Activated CD8-positive, alpha-beta T cell treated with anti-CD3 and anti-CD28 coated beads, Interleukin-2, amount 10 ng/mL, durations not matched to agents 7 days and 5 days (primary cell): ENCODE measurements at regions of chr16 and their contacts with region 1.

Region 1: GRCh38 chr16:50326949-50327402 is 41.8 kb downstream of the BRD7 start:
- DNase-seq: peak; percentile 88
- ATAC-seq: peak; percentile 96
- H3K4me3 Mint-ChIP-seq: no peak overlapping the region
- H3K27ac Mint-ChIP-seq: peak overlapping the region; percentile 78
- H3K4me1 Mint-ChIP-seq: peaks cover 62% of the 10 kb centered on the region
- H3K27me3 Mint-ChIP-seq: no peaks in the 10 kb centered on the region

Region 2: DNA sequence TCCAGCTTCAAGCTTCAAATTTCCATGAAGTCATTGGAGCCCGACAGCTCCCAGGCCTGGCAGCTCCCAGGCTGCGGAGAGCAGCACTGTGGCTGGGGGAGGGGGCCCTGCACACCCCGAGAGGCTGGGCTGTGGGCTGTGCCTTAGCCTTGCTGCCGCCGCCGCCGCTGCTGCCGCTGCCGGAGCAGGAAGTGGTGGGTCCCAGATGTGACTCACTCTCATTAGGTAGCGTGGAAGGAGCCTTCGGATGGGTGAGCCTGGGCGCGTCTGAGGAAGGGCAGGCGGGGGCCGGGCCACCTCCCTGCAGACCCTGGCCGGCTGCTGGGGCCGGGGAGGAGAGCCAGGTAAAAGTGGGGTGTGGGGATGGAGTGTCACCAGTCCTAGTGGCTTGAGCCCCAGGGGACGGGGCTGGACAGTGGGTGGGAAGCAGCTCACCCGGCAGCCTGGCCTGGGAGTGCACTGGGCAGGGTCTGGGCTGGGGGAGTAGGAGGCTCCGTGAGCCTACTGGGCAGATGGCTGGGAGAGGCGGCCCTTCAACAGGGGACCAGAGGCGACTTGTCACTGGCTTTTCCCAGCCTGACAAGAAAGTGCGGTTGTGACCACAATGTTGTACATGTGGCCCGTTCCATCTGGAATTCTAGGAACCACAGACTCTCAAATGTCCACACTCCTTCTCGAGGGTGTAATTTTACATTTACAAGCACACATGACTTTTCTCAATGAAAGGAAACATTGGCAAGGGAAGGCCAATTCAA is 60.5 kb before region 1 on chr16 and contains the start of gene ADCY7:
- CTCF ChIA-PET with region 1: interaction called, 19 read pairs
- POLR2A ChIA-PET with region 1: no interaction called
- DNase-seq: peak; percentile 90
- ATAC-seq: peak; percentile 91
- H3K4me3 Mint-ChIP-seq: peak within 1 kb of the TSS; percentile 98
- H3K27ac Mint-ChIP-seq: peak within 1 kb of the TSS; percentile 98
- H3K4me1 Mint-ChIP-seq: peaks cover 83% of the 10 kb centered on the region
- H3K27me3 Mint-ChIP-seq: no peaks in the 10 kb centered on the region
- total RNA-seq, gene ADCY7: 214 to 225 TPM

Region 3: GRCh38 chr16:50281964-50282538 is 44.9 kb before region 1 on chr16:
- CTCF ChIA-PET with region 1: interaction called, 13 read pairs
- POLR2A ChIA-PET with region 1: no interaction called
- DNase-seq: peak; percentile 82
- ATAC-seq: peak; percentile 73
- H3K4me3 Mint-ChIP-seq: peak overlapping the region; percentile 65
- H3K27ac Mint-ChIP-seq: peak overlapping the region; percentile 83
- H3K4me1 Mint-ChIP-seq: peaks cover 91% of the 10 kb centered on the region
- H3K27me3 Mint-ChIP-seq: no peaks in the 10 kb centered on the region

Region 4: DNA sequence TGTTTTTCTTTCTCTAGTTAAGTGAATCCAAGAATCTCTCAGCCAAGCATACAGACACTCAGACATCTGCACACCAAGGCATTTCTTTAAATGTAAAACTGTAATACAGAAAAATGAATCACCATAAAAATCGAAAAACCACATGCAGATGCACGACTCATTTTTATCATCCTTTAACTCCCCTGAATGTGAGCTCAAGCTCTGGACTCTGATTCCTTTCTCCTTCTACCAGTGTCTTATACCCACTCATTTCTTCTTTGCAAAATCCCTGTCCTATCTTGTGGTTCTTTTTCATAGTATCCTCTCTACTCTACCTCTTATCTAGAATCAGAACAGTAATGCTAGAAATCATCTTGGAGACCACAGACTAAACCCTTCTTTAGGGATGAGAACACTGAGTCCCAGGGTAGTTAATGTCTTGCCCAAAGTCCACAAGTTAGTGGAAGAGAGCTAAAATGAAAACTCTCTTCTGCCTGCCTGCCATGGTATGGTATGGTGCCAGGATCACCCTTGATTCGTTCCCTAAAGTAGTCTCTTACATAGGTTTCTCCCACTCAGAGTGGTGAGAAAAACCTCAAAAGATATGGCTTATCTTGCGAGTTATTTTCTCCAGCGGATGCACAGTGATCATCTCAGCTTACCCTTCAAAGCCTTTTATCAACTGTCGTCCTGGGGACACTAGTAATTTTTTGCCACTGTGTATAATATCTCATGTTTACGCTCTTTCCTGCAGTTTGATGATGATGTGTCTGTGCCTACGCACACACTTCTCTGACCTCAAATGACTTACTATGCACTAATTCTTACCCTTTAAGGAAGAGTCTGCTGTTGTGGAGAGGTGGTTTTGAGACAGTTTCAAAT is 11.6 kb after region 1 on chr16:
- CTCF ChIA-PET with region 1: interaction called, 121 read pairs
- POLR2A ChIA-PET with region 1: interaction called, 38 read pairs
- DNase-seq: no peak
- ATAC-seq: peak; percentile 59
- H3K4me3 Mint-ChIP-seq: peak overlapping the region; percentile 59
- H3K27ac Mint-ChIP-seq: peak overlapping the region; percentile 88
- H3K4me1 Mint-ChIP-seq: peaks cover 44% of the 10 kb centered on the region
- H3K27me3 Mint-ChIP-seq: no peaks in the 10 kb centered on the region

Region 5: GRCh38 chr16:50368410-50369132 is 41.6 kb after region 1 on chr16 and contains the start of gene BRD7:
- CTCF ChIA-PET with region 1: interaction called, 37 read pairs
- POLR2A ChIA-PET with region 1: interaction called, 3 read pairs
- DNase-seq: peak; percentile 69
- ATAC-seq: peak; percentile 84
- H3K4me3 Mint-ChIP-seq: peak within 1 kb of the TSS; percentile 82
- H3K27ac Mint-ChIP-seq: peak within 1 kb of the TSS; percentile 93
- H3K4me1 Mint-ChIP-seq: peaks cover 41% of the 10 kb centered on the region
- H3K27me3 Mint-ChIP-seq: peaks cover 2% of the 10 kb centered on the region
- total RNA-seq, gene BRD7: 88.9 to 90.4 TPM

Region 6: GRCh38 chr16:50747207-50747956 is 420.4 kb after region 1 on chr16:
- CTCF ChIA-PET with region 1: interaction called, 11 read pairs
- POLR2A ChIA-PET with region 1: no interaction called
- DNase-seq: peak; percentile 61
- ATAC-seq: peak; percentile 72
- H3K4me3 Mint-ChIP-seq: peak overlapping the region; percentile 80
- H3K27ac Mint-ChIP-seq: peak overlapping the region; percentile 95
- H3K4me1 Mint-ChIP-seq: peaks cover 61% of the 10 kb centered on the region
- H3K27me3 Mint-ChIP-seq: no peaks in the 10 kb centered on the region